PC-9 (cell line): ENCODE measurements at regions of chr2 and their contacts with region 1.

Region 1: DNA sequence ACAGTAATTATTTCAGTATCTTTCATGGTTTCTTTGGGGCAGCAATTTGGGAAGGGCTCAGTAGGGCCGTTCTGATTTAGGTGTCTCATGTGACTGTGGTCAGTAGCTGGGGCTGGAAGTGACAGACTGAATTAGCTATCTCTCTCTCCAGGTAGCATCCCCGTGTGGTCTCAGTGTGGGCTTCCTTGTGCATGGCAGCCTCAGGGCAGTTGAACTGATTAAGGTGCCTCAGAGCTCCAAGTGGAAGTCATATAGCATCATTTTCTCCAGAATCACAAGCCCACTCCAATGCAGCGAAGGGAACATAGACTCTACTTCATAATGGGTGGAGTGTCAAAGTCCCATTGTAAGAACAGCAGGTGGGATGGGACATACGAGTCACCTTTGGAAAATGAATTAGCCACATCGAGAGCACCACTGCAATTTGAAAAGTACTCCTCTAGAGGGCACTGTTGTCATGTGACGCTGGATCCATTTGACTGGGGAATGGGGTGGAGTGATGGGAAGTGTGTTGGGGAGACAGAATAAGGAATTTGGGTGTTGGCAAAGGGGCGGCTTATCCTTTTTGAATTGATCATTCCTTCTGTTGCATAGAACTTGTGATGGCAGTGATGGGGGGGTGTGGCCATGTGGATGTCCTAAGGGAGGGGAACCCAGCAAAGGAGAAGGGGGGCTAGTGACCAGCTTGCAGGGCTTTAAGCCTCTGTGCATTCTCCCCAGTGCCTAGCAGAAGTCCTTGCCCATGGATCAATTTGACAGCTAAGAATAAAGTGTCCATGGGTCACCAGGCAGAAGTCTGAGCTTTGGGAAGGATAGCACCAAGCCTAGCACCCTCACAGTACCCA is 39.3 kb upstream of the FAM136A start:
- DNase-seq: peak; percentile 65 to 70
- H3K4me3 ChIP-seq: no peak overlapping the region
- H3K27ac ChIP-seq: no peak overlapping the region
- H3K4me1 ChIP-seq: peaks cover 17% of the 10 kb centered on the region
- H3K27me3 ChIP-seq: no peaks in the 10 kb centered on the region
- CTCF ChIP-seq: peak; percentile 90

Region 2: DNA sequence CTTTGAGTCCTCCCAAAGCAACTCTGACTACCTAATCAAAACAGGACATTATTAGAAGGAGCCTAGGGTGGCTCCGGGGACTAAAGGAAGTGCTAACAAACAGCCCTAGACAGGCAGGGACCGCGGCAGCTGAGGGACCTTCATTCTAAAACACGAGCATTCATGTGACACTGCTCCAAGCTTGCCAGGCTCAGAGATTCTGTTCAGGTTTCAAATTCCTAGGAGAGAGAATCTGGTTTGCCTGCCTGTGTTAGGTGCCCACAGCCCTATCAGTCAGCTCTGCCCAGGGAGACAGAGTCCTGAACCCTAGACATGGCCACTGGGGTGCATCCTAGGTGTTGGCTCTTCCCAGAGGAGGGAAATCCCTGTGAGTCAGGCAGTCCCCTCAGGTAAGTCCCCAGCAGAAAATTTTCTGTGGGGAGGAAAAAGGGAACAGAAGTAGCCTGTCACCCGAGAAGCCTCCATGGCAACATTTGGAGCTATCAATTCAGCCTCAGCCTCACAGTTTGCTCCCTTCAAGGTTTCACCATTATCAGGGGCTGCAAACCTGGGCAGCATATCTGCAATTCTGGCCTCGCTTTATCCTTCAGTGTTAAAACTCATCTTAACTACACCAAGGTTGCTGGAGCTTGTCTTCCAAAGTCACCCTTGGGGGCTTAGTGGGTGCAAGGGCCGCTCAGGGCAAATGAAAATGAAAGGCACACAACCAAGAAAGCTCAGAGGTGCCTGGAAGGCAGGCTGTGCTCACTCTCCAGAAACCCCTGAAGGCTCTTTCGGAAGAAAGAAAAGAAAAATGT is 225.3 kb before region 1 on chr2:
- CTCF ChIA-PET with region 1: no interaction called
- POLR2A ChIA-PET with region 1: no interaction called
- intact Hi-C with region 1: no loop called
- DNase-seq: no peak
- H3K4me3 ChIP-seq: no peak overlapping the region
- H3K27ac ChIP-seq: no peak overlapping the region
- H3K4me1 ChIP-seq: peaks cover 7% of the 10 kb centered on the region
- H3K27me3 ChIP-seq: no peaks in the 10 kb centered on the region
- CTCF ChIP-seq: no peak

Region 3: DNA sequence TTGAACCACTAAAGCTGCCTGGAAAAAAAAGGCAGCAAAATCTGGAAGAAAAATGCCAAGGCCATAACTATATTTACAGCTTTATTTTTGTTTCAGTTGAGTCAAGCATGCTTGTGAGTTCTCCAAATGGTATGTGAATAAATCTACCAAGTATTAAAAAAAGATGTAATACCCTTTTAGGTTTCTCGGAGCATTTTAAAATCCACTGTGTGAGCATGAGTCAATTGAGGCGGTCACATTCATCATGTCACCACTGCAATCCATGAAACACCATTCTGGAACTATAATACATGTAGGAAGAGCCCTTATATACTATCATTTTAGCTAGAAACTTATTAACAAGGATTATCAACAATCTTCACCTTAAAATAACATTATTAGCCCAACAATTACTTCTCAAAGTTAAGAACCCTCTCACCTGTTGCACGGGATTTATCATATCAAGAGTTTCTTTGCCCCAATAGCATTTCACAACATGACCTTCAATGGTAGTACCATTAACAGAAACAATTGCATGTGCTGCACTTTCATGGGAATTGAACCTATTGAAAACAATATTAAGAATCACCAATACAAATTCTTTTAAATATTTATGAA is 126.1 kb before region 1 on chr2:
- CTCF ChIA-PET with region 1: no interaction called
- POLR2A ChIA-PET with region 1: no interaction called
- intact Hi-C with region 1: no loop called
- DNase-seq: no peak
- H3K4me3 ChIP-seq: no peak overlapping the region
- H3K27ac ChIP-seq: no peak overlapping the region
- H3K4me1 ChIP-seq: no peaks in the 10 kb centered on the region
- H3K27me3 ChIP-seq: no peaks in the 10 kb centered on the region
- CTCF ChIP-seq: no peak

Region 4: DNA sequence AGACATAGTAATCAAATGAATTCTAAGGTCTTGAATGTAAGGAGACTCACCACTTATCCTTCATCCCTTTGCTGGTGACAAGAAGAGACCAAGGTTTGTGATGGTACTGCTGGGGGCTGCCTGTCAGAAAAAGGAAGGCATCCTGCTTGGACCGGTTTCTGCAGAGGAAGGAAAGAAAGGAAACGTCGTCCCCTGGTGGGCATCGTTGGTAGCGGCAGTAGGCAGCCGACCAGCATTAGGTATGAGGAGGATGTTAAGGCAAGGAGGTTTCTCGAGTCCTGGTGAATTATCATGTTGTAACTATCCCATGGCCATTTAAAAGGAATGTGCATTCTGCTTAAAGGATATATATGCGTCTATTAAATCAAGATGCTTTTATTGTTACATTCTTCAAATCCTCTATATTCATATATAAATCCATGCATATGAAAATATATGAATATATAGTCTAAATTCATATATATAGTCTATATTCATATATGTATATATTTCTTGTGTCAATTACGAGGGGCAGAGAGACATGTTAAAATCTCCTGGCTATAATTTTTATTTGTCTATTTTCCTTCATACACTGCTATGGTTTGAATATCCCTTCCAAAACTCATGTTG is 306.8 kb after region 1 on chr2:
- CTCF ChIA-PET with region 1: no interaction called
- POLR2A ChIA-PET with region 1: no interaction called
- intact Hi-C with region 1: loop called (anchors 1 kb)
- DNase-seq: peak; percentile 53 to 78
- H3K4me3 ChIP-seq: no peak overlapping the region
- H3K27ac ChIP-seq: no peak overlapping the region
- H3K4me1 ChIP-seq: no peaks in the 10 kb centered on the region
- H3K27me3 ChIP-seq: no peaks in the 10 kb centered on the region
- CTCF ChIP-seq: peak; percentile 95

Region 5: GRCh38 chr2:71379088-71379487 is 1037.9 kb after region 1 on chr2:
- CTCF ChIA-PET with region 1: no interaction called
- POLR2A ChIA-PET with region 1: no interaction called
- intact Hi-C with region 1: no loop called
- DNase-seq: no peak
- H3K4me3 ChIP-seq: no peak overlapping the region
- H3K27ac ChIP-seq: peak overlapping the region; percentile 55
- H3K4me1 ChIP-seq: no peaks in the 10 kb centered on the region
- H3K27me3 ChIP-seq: no peaks in the 10 kb centered on the region
- CTCF ChIP-seq: no peak